Lower leg skin (tissue), 4 donors: ENCODE measurements at regions of chr6 and their contacts with region 1.

Region 1: GRCh38 chr6:35139908-35140655 is 1.1 kb downstream of the TCP11 start:
- DNase-seq: no peak
- H3K4me3 ChIP-seq: no peak overlapping the region
- CTCF ChIP-seq: peak in 1 of 3 donors; percentile 56
- POLR2A ChIP-seq: no peak

Region 2: DNA sequence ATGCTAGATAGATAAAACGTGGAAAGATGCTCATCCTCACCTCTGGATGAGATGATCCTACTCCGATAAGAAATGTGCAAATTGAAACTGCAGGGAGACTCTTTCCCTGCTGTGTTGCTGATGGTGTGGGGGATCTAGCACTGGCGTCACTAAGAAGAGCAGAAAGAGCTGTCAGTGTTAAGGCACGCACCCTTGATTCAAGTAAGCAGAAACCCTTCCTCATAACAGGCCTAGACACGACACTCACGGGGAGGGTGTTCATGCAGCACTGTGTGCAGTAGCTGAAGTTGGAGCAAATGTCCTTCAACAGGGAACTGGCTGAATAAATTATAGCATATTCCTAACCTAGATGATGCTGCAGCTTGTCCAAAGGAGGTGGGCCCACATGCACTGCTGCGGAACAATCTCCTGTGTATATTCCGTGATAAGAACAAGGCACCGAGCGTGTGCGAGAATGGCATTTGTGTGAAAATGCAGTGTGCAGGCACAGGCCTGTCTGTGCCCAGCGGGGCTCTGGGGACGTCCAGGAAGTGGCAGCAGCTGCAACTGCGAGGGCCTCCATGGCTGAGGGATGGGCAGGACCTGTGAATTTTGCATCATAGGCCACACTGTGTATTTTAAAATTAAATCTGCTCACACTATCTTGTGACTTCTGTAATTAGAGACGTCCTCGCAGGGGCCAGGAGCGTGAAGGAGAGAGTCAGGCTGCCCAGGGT is 62.9 kb before region 1 on chr6:
- intact Hi-C with region 1: no loop called
- DNase-seq: no peak
- H3K4me3 ChIP-seq: no peak overlapping the region
- CTCF ChIP-seq: no peak
- POLR2A ChIP-seq: no peak

Region 3: GRCh38 chr6:35240840-35241801 is 101.0 kb after region 1 on chr6:
- intact Hi-C with region 1: loop called (anchors 10 kb)
- DNase-seq: peak; percentile 60 to 92
- H3K4me3 ChIP-seq: no peak overlapping the region
- CTCF ChIP-seq: peak in 1 of 3 donors; percentile 62
- POLR2A ChIP-seq: no peak

Region 4: GRCh38 chr6:37092923-37093920 is 1953.1 kb after region 1 on chr6:
- intact Hi-C with region 1: no loop called
- DNase-seq: peak; percentile 35 to 87
- H3K4me3 ChIP-seq: no peak overlapping the region
- CTCF ChIP-seq: no peak
- POLR2A ChIP-seq: no peak